BJ (cell line): ENCODE measurements at regions of chr14 and their contacts with region 1.

Region 1: GRCh38 chr14:22994762-22995275 is 12.5 kb upstream of the AJUBA start:
- DNase-seq: no peak
- H3K4me3 ChIP-seq: no peak overlapping the region
- H3K27me3 ChIP-seq: no peaks in the 10 kb centered on the region
- CTCF ChIP-seq: peak; percentile 72

Region 2: DNA sequence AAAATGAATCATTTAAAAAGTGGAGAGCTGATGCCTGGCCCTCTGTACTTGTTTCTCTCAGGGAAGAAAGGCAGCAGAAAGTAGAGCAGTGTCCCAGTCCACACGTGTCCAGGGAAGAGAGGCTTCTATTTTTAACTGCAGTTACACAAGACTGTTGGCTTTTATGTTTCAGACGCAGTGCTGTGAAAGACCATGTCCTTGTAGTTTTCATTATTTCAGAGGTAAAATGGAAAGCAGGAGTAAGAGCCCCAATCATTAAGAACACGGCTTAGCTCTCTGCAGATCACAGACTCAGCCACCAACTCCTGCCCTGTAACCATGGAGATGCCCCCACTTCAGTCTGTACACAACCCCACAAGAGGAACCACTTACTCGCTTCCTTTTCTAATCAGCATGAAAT is 742.1 kb before region 1 on chr14:
- CTCF ChIA-PET with region 1: no interaction called
- POLR2A ChIA-PET with region 1: no interaction called
- DNase-seq: no peak
- H3K4me3 ChIP-seq: no peak overlapping the region
- H3K27me3 ChIP-seq: no peaks in the 10 kb centered on the region
- CTCF ChIP-seq: no peak

Region 3: DNA sequence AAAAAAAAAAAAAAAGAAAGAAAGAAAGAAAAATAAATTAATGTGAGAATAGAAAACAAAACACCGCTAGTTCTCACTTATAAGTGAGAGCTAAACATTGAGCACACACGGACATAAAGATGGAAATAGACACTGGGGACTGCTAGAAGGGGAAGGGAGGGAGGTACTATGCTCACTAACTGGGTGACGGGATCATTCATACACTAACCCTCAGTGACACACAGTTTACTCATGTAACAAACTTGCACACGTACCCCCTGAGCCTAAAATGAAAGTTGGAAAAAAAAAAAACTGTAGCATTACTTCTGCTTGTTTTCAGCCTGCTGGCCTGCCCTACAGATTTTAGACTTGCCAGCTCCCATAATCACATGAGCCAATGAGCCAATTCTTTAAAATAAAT is 55.1 kb before region 1 on chr14:
- CTCF ChIA-PET with region 1: interaction called, 3 read pairs
- POLR2A ChIA-PET with region 1: interaction called, 16 read pairs
- DNase-seq: no peak
- H3K4me3 ChIP-seq: no peak overlapping the region
- H3K27me3 ChIP-seq: no peaks in the 10 kb centered on the region
- CTCF ChIP-seq: no peak

Region 4: DNA sequence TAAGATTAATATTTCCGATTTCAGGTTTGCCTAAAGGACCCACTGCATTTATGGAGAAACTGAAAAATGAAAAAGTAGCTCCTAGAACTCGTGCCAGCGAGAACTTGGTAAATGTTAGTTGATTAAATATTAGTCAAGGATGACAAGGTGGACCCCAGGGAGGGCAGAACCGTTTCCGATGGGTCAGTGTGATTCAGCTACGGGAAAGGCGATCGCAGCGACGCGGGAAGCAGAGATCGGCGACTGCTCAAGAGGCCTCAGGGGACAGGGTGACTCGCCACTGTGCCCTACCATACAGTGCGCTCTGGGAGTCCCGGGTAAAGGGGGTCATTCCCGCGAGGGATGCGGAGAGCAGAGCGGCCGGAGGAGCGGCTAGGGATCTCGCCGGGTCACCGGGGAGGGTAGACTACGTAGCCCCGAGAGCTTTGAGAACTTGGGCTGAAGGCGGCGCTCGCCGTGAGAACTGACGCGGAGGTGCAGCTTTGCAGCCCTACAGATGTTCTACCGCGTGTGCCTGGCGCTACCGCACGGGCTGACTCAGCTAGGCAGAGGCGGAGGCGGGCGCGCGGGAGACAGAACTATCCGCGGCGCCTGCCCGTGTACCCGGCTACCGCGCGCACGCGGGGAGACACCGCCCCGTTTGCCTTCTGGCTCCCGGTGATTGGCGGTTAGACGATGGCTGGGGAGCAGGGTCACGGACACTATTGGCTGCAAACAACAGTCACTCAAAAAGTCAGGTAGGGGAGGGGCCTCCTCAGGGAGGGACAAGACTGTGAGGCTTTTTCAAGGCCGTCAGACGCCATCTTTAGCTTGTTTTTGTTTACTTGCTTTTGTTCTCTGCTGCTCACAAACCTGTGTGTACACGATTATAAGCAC is 12.0 kb after region 1 on chr14:
- CTCF ChIA-PET with region 1: interaction called, 59 read pairs
- POLR2A ChIA-PET with region 1: no interaction called
- DNase-seq: peak; percentile 87
- H3K4me3 ChIP-seq: peak overlapping the region; percentile 75
- H3K27me3 ChIP-seq: no peaks in the 10 kb centered on the region
- CTCF ChIP-seq: peak; percentile 51

Region 5: DNA sequence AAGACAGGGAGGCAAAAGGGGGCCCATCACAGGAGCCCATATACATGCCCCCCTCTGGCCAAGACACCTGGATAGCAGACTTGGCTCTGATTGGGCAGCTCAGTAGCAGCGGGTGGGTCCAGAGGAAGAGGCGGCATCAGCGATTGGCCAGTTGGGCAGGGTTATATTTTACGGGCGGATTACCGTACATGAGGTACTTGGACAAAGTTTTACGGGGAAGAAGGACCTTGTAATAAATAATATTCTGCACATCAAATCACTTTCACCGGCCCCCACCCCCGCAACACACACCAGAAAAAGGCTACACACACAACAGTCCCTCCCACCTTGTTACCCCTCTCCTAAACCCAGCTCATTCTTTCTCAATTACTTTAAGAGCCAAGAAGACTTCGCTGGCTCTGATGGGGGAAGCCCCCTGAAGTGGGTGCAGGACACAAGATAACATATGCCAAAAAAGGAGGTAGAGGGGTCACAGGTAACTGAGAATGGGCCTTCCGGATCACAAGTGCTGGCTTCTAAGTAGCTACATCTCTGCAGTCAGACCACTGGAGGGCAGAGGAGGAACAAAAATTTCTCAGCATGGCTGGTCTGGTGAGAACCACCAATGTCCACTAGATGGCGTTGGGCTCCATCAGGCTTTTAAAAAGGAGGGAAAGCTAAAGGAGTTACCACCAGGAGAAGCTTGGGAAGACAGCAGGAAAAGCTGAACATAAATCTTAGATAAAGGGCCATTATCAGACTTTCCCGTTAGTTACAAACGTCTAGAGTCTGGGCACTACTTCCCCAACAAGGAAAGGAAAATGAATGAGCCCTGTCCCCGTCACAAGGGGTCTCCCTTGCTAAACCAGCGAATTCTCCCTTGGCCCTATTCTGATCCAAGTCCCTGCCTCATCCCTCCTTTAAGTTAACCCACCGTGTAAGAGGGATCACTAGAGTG is 73.9 kb after region 1 on chr14:
- CTCF ChIA-PET with region 1: interaction called, 539 read pairs
- POLR2A ChIA-PET with region 1: no interaction called
- DNase-seq: peak; percentile 70
- H3K4me3 ChIP-seq: no peak overlapping the region
- H3K27me3 ChIP-seq: no peaks in the 10 kb centered on the region
- CTCF ChIP-seq: peak; percentile 99